Cardiac septum (tissue), 1 donor: ENCODE measurements at regions of chr3 and their contacts with region 1.

Region 1: DNA sequence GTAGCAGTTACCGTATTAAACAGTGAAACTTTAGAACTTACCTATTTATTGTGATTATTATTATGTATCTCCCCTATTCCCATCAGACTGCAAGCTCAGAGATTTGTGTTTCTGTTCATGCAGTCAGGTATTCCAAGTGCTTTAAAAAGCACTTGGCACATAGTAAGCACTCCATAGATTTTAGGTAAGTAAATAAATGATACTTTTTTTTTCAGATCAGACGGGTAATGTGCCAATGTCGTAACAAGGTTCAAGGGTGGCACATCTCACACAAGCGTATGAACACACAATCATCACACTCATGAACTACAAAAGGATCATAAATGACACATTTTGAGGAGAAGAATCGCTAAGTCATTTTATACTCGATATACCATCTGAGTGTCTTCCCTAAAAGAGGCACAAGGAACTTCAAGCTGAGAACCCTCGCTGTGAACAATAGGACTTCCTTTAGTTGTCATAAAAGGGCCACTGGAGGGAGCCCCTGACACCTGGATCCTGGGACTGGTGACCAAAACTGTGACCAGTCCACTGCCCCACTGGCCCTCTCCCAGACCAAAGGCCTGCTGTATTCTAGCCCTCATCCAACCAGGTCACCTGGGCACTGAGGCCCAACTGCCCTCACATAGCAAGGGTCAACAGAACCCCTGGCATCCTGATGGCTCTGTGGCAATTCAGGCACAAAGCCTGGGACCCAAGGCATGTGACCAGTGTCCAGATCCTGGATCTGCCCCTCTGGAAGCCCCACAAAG is 32.1 kb downstream of the KIF9 start:
- DNase-seq: no peak

Region 2: DNA sequence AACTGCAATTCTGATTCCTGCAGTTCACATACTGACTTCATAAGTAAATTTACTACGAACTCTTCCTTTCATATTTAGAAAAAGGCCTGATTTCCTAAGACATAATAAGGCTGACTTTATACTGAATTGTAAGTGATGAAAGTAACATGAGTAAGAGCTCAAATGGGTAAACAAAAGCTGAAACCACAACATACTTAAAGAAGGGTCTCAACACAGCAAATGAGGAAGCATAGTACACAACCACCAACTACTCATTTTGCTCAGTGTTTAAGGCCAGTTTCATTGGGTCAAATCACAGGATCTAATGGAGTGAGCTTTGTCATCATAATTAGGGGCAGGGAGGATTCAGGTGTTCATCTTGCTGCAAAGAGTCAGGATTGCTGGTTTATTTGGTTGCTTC is 168.0 kb before region 1 on chr3:
- intact Hi-C with region 1: no loop called
- DNase-seq: no peak

Region 3: GRCh38 chr3:47202542-47202941 is 47.9 kb before region 1 on chr3:
- intact Hi-C with region 1: no loop called
- DNase-seq: no peak

Region 4: GRCh38 chr3:47370887-47371697 is 120.6 kb after region 1 on chr3:
- intact Hi-C with region 1: loop called (anchors 5 kb)
- DNase-seq: no peak